Activated naive CD4-positive, alpha-beta T cell treated with anti-CD3 and anti-CD28 coated beads for 36 hours (primary cell): ENCODE measurements at regions of chr2 and their contacts with region 1.

Region 1: DNA sequence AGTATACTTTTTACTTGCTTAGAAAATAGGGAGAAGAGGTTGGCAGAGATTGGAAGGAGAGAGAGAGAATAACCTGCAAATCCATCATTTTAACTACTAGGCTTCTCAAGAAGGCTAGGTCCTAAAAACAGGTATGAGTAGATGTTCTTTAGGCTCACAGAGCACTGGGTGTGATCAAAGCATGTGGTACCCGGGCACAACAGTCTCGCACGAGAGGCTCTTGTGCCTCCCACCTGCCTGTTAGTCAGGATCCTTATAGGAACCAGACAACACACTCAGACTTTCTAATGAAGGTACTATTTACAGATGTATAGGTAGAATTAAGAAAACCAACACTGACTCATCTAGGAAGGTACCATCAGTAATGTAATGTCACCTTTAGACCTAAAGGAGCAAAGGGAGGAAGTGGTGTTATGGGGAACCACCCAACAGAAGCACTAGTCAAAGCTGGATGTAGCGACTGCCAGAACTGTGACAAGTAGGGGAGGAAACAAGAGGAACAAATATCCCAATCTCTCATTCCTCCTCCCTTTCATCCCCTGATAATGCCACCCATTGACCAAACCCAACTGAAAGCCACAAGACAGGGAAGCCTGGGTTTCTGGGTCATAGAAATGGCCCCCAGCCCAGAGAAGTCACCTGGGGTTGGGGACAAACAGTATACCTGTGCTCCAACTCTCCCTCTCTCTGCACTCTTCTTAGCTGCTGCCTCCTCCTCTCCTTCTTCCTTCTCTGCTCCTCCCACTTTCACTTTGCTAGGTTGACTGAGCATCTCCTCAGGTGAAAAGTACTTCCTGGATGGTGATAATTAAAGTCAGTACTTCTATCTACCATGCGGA is 16.0 kb upstream of the MARCHF4 start:
- DNase-seq: peak; percentile 70
- H3K4me3 Mint-ChIP-seq: no peak overlapping the region
- H3K27ac Mint-ChIP-seq: peak overlapping the region; percentile 71
- H3K4me1 Mint-ChIP-seq: peaks cover 16% of the 10 kb centered on the region
- H3K27me3 Mint-ChIP-seq: no peaks in the 10 kb centered on the region

Region 2: DNA sequence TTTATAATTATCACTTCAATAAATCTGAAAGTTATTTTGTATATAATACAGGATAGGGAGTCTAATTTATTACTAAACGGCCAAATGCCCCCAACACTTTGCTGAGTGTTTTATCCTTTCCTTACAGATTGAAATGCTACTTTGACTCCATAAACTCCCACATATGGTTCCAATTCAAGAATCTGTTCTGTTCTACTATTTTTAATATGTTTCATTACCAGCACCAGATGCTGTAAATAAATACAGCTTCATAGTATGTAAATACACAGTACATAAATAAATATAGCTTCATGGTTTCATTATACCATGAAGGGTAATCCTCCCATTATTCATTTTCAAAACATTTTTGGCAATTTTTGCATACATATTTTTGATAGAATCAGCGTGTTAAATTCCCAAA is 340.9 kb before region 1 on chr2:
- CTCF ChIA-PET with region 1: no interaction called
- intact Hi-C with region 1: no loop called
- DNase-seq: no peak
- H3K4me3 Mint-ChIP-seq: no peak overlapping the region
- H3K27ac Mint-ChIP-seq: no peak overlapping the region
- H3K4me1 Mint-ChIP-seq: peaks cover 6% of the 10 kb centered on the region
- H3K27me3 Mint-ChIP-seq: no peaks in the 10 kb centered on the region

Region 3: GRCh38 chr2:216081487-216082116 is 306.7 kb before region 1 on chr2 and contains the starts of genes PECR and TMEM169:
- CTCF ChIA-PET with region 1: no interaction called
- intact Hi-C with region 1: loop called (anchors 1 kb)
- DNase-seq: peak; percentile 83
- H3K4me3 Mint-ChIP-seq: peak within 1 kb of the TSS; percentile 87
- H3K27ac Mint-ChIP-seq: peak within 1 kb of the TSS; percentile 75
- H3K4me1 Mint-ChIP-seq: peaks cover 58% of the 10 kb centered on the region
- H3K27me3 Mint-ChIP-seq: no peaks in the 10 kb centered on the region
- total RNA-seq, gene PECR: 18.8 to 20.9 TPM
- total RNA-seq, gene TMEM169: 0.57 to 0.81 TPM

Region 4: GRCh38 chr2:216119986-216120385 is 268.3 kb before region 1 on chr2:
- CTCF ChIA-PET with region 1: no interaction called
- intact Hi-C with region 1: loop called (anchors 1 kb)
- DNase-seq: peak; percentile 31
- H3K4me3 Mint-ChIP-seq: peak overlapping the region; percentile 33
- H3K27ac Mint-ChIP-seq: peak overlapping the region; percentile 95
- H3K4me1 Mint-ChIP-seq: peaks cover 79% of the 10 kb centered on the region
- H3K27me3 Mint-ChIP-seq: no peaks in the 10 kb centered on the region

Region 5: GRCh38 chr2:216163518-216163917 is 224.7 kb before region 1 on chr2:
- CTCF ChIA-PET with region 1: no interaction called
- intact Hi-C with region 1: no loop called
- DNase-seq: no peak
- H3K4me3 Mint-ChIP-seq: no peak overlapping the region
- H3K27ac Mint-ChIP-seq: no peak overlapping the region
- H3K4me1 Mint-ChIP-seq: peaks cover 30% of the 10 kb centered on the region
- H3K27me3 Mint-ChIP-seq: no peaks in the 10 kb centered on the region

Region 6: GRCh38 chr2:216206041-216206703 is 182.1 kb before region 1 on chr2:
- CTCF ChIA-PET with region 1: no interaction called
- intact Hi-C with region 1: loop called (anchors 1 kb)
- DNase-seq: no peak
- H3K4me3 Mint-ChIP-seq: no peak overlapping the region
- H3K27ac Mint-ChIP-seq: peak overlapping the region; percentile 93
- H3K4me1 Mint-ChIP-seq: peaks cover 77% of the 10 kb centered on the region
- H3K27me3 Mint-ChIP-seq: no peaks in the 10 kb centered on the region

Region 7: GRCh38 chr2:216350214-216350789 is 38.0 kb before region 1 on chr2:
- CTCF ChIA-PET with region 1: no interaction called
- intact Hi-C with region 1: loop called (anchors 1 kb)
- DNase-seq: peak; percentile 56
- H3K4me3 Mint-ChIP-seq: no peak overlapping the region
- H3K27ac Mint-ChIP-seq: peak overlapping the region; percentile 23
- H3K4me1 Mint-ChIP-seq: peaks cover 80% of the 10 kb centered on the region
- H3K27me3 Mint-ChIP-seq: no peaks in the 10 kb centered on the region

Region 8: GRCh38 chr2:216362730-216363129 is 25.5 kb before region 1 on chr2:
- CTCF ChIA-PET with region 1: no interaction called
- intact Hi-C with region 1: no loop called
- DNase-seq: no peak
- H3K4me3 Mint-ChIP-seq: no peak overlapping the region
- H3K27ac Mint-ChIP-seq: no peak overlapping the region
- H3K4me1 Mint-ChIP-seq: no peaks in the 10 kb centered on the region
- H3K27me3 Mint-ChIP-seq: no peaks in the 10 kb centered on the region

Region 9: GRCh38 chr2:216404010-216404618 is 15.8 kb after region 1 on chr2:
- CTCF ChIA-PET with region 1: interaction called, 3 read pairs
- intact Hi-C with region 1: loop called (anchors 1 kb)
- DNase-seq: peak; percentile 71
- H3K4me3 Mint-ChIP-seq: no peak overlapping the region
- H3K27ac Mint-ChIP-seq: no peak overlapping the region
- H3K4me1 Mint-ChIP-seq: no peaks in the 10 kb centered on the region
- H3K27me3 Mint-ChIP-seq: no peaks in the 10 kb centered on the region

Region 10: GRCh38 chr2:216478151-216478550 is 89.9 kb after region 1 on chr2:
- CTCF ChIA-PET with region 1: no interaction called
- intact Hi-C with region 1: loop called (anchors 1 kb)
- DNase-seq: peak; percentile 68
- H3K4me3 Mint-ChIP-seq: no peak overlapping the region
- H3K27ac Mint-ChIP-seq: no peak overlapping the region
- H3K4me1 Mint-ChIP-seq: peaks cover 23% of the 10 kb centered on the region
- H3K27me3 Mint-ChIP-seq: no peaks in the 10 kb centered on the region